Activated CD4-positive, alpha-beta T cell treated with anti-CD3 and anti-CD28 coated beads for 36 hours (primary cell): ENCODE measurements at regions of chr7 and their contacts with region 1.

Region 1: GRCh38 chr7:36723951-36724664 is at the start of gene AOAH:
- DNase-seq: peak; percentile 88
- ATAC-seq: peak; percentile 79
- H3K4me3 Mint-ChIP-seq: peak within 1 kb of the TSS; percentile 79
- H3K27ac Mint-ChIP-seq: peak within 1 kb of the TSS; percentile 93
- H3K4me1 Mint-ChIP-seq: peaks cover 84% of the 10 kb centered on the region
- H3K27me3 Mint-ChIP-seq: no peaks in the 10 kb centered on the region
- total RNA-seq, gene AOAH: 9.2 to 10.0 TPM

Region 2: DNA sequence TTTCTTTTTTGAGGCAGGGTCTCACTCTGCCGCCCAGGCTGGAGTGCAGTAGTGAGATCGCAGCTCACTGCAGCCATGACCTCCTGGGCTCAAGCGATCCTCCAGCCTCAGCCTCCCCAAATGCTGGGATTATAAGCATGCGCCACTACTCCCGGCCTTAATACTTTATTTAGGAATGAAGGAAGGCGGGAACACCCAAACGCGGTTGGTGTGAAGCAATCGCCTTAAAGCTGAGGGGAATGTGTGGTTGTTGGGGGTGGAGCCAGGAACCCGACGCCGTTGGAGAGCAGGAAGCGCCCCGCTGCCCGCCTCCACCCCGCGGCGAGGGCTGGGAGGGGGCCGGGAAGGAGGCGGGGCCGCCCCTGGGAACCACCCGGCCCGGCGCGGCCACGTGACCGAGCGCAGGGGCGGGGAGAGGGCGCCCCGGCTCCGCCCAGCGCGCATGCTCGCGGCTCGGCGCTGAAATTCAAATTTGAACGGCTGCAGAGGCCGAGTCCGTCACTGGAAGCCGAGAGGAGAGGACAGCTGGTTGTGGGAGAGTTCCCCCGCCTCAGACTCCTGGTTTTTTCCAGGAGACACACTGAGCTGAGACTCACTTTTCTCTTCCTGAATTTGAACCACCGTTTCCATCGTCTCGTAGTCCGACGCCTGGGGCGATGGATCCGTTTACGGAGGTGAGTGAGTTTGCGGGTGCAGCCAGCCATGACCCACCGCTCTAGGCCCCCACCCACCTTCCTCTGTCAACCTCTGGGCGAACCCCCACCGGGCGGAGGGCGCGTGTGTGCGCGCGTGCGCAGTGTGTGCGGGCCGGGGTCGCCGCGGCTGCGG is 334.5 kb before region 1 on chr7 and contains the start of gene ANLN:
- CTCF ChIA-PET with region 1: no interaction called
- POLR2A ChIA-PET with region 1: no interaction called
- intact Hi-C with region 1: loop called in 1 of 2 experiments (anchors 2 kb)
- DNase-seq: peak; percentile 92
- ATAC-seq: peak; percentile 86
- H3K4me3 Mint-ChIP-seq: peak within 1 kb of the TSS; percentile 87
- H3K27ac Mint-ChIP-seq: peak within 1 kb of the TSS; percentile 83
- H3K4me1 Mint-ChIP-seq: peaks cover 26% of the 10 kb centered on the region
- H3K27me3 Mint-ChIP-seq: peaks cover 8% of the 10 kb centered on the region
- total RNA-seq, gene ANLN: 52.5 to 58.3 TPM

Region 3: GRCh38 chr7:36686499-36686898 is 37.6 kb before region 1 on chr7:
- CTCF ChIA-PET with region 1: interaction called, 7 read pairs
- POLR2A ChIA-PET with region 1: interaction called, 3 read pairs
- intact Hi-C with region 1: loop called (anchors 2 kb)
- DNase-seq: peak; percentile 67
- ATAC-seq: peak; percentile 78
- H3K4me3 Mint-ChIP-seq: no peak overlapping the region
- H3K27ac Mint-ChIP-seq: peak overlapping the region; percentile 69
- H3K4me1 Mint-ChIP-seq: peaks cover 80% of the 10 kb centered on the region
- H3K27me3 Mint-ChIP-seq: no peaks in the 10 kb centered on the region

Region 4: GRCh38 chr7:36707465-36707864 is 16.6 kb before region 1 on chr7:
- CTCF ChIA-PET with region 1: interaction called, 4 read pairs
- POLR2A ChIA-PET with region 1: no interaction called
- intact Hi-C with region 1: loop called in 1 of 2 experiments (anchors 2 kb)
- DNase-seq: no peak
- ATAC-seq: peak; percentile 67
- H3K4me3 Mint-ChIP-seq: peak overlapping the region; percentile 37
- H3K27ac Mint-ChIP-seq: peak overlapping the region; percentile 91
- H3K4me1 Mint-ChIP-seq: peaks cover 70% of the 10 kb centered on the region
- H3K27me3 Mint-ChIP-seq: no peaks in the 10 kb centered on the region

Region 5: GRCh38 chr7:36742911-36743775 is 19.0 kb after region 1 on chr7:
- CTCF ChIA-PET with region 1: no interaction called
- POLR2A ChIA-PET with region 1: no interaction called
- intact Hi-C with region 1: no loop called
- DNase-seq: no peak
- ATAC-seq: no peak
- H3K4me3 Mint-ChIP-seq: no peak overlapping the region
- H3K27ac Mint-ChIP-seq: no peak overlapping the region
- H3K4me1 Mint-ChIP-seq: peaks cover 11% of the 10 kb centered on the region
- H3K27me3 Mint-ChIP-seq: no peaks in the 10 kb centered on the region

Region 6: DNA sequence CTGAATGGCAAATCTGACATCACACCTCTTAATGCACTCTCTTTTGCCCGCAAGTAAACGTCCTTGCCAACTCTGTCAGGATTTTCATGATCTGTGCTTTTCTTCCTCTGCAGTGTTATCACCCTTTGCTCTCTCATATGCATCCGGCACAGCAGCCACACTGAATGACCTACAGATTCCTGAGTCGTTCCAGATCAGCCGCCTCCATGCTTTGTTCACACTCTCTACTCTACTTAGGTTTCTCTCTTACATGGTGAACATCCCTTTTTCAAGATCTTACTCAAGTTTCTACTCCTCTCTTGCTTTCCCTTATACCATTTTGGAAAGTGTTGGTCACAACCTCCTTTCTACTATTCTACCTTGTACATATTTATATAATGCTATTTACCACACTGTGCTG is 127.9 kb after region 1 on chr7:
- CTCF ChIA-PET with region 1: no interaction called
- POLR2A ChIA-PET with region 1: no interaction called
- intact Hi-C with region 1: loop called (anchors 5 kb)
- DNase-seq: peak; percentile 52
- ATAC-seq: peak; percentile 87
- H3K4me3 Mint-ChIP-seq: no peak overlapping the region
- H3K27ac Mint-ChIP-seq: peak overlapping the region; percentile 82
- H3K4me1 Mint-ChIP-seq: peaks cover 22% of the 10 kb centered on the region
- H3K27me3 Mint-ChIP-seq: no peaks in the 10 kb centered on the region

Region 7: DNA sequence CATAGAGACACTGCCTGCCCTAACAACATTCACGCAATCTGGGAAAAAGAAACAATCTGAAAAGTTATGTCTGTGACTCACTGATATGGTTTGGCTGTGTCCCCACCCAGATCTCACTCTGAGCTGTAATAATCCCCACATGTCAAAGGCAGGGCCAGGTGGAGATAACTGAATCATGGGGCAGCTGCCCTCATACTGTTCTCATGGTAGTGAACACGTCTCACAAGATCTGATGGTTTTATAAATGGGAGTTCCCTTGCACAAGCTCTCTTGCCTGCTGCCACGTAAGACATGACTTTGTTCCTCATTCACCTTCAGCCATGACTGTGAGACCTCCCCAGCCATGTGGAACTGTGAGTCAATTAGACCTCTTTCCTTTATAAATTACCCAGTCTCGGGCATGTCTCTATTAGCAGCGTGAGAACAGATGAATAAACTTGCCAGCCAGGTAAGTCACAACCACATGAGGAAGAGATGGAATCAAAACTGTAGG is 341.7 kb after region 1 on chr7:
- CTCF ChIA-PET with region 1: no interaction called
- POLR2A ChIA-PET with region 1: no interaction called
- intact Hi-C with region 1: loop called (anchors 5 to 10 kb)
- DNase-seq: peak; percentile 71
- ATAC-seq: peak; percentile 86
- H3K4me3 Mint-ChIP-seq: peak overlapping the region; percentile 20
- H3K27ac Mint-ChIP-seq: peak overlapping the region; percentile 88
- H3K4me1 Mint-ChIP-seq: peaks cover 70% of the 10 kb centered on the region
- H3K27me3 Mint-ChIP-seq: no peaks in the 10 kb centered on the region

Region 8: DNA sequence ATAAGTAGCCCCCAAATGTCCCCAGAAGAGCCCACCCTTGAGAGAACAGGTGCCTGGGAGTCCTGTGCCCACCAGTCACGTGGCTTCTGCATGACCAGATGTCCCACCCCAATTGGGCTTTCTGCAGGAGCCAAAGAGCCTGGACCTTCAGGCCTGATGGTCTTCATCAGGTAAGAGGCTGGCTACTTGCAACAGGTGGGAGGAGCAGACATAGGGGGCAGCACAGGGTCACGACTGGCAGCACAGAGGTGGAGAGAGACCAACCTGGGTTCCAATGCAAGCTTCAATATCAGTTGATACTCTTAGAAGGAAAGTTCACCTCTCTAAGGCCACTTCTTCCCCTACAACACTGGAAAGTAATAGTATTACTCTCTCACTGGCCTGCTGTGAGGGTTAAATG is 436.5 kb after region 1 on chr7:
- CTCF ChIA-PET with region 1: no interaction called
- POLR2A ChIA-PET with region 1: no interaction called
- intact Hi-C with region 1: no loop called
- DNase-seq: no peak
- ATAC-seq: no peak
- H3K4me3 Mint-ChIP-seq: no peak overlapping the region
- H3K27ac Mint-ChIP-seq: no peak overlapping the region
- H3K4me1 Mint-ChIP-seq: peaks cover 4% of the 10 kb centered on the region
- H3K27me3 Mint-ChIP-seq: no peaks in the 10 kb centered on the region